OCI-LY7 (cell line): ENCODE measurements at regions of chr9 and their contacts with region 1.

Region 1: GRCh38 chr9:2502760-2503159 is 118.8 kb upstream of the VLDLR start:
- DNase-seq: no peak
- H3K4me3 ChIP-seq: no peak overlapping the region
- H3K27ac ChIP-seq: no peak overlapping the region
- H3K4me1 ChIP-seq: no peaks in the 10 kb centered on the region
- CTCF ChIP-seq: no peak

Region 2: GRCh38 chr9:2536511-2536910 is 33.8 kb after region 1 on chr9:
- CTCF ChIA-PET with region 1: no interaction called
- POLR2A ChIA-PET with region 1: no interaction called
- intact Hi-C with region 1: loop called (anchors 1 kb)
- DNase-seq: no peak
- H3K4me3 ChIP-seq: no peak overlapping the region
- H3K27ac ChIP-seq: no peak overlapping the region
- H3K4me1 ChIP-seq: no peaks in the 10 kb centered on the region
- CTCF ChIP-seq: no peak